Ovary (tissue), 10 donors: ENCODE measurements at regions of chr9 and their contacts with region 1.

Region 1: DNA sequence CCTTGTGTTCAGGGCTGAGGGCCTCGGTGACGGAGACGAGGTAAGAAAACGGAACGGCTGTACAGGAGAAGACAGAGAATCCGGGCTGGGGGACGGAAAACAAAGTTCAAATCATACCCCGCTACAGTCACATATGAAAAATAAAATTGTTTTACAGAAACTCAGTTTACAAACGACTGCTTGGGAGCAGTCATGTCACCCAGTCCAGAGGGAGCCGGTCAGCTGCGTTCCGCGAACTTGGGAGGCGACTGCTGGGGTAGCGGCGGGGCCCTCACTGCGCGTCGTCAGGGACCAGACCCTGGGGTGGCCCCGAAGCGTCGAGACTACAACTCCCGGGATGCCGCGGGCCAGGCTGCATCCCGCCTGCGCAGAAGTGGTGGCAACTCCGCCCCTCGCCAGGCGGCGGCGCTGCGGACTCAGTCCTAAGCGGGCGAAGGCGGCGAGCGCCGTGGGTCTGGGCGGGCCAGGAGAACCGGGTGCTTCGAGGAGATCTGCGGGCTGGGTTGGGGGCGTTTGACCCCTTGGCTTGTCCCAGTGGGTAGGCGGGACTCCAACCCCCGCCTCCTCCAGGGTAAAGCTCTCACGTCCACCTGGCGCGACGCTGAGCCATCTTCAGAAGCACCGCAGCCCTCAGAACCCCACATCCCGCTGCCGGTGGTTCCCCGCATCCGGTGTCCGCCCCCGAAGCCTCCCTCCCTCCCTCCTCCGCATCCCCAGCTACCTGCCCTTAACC is 4.0 kb downstream of the SIT1 start:
- DNase-seq: peak; percentile 93 to 97 (median 95)
- H3K4me3 ChIP-seq: peak overlapping the region; percentile 42
- H3K27ac ChIP-seq: peak overlapping the region; percentile 48 to 78
- H3K4me1 ChIP-seq: peaks cover 3% of the 10 kb centered on the region
- H3K27me3 ChIP-seq: no peaks in the 10 kb centered on the region
- CTCF ChIP-seq: peak; percentile 96 to 99 (median 98)
- EP300 ChIP-seq: no peak
- POLR2A ChIP-seq: peak; percentile 88

Region 2: DNA sequence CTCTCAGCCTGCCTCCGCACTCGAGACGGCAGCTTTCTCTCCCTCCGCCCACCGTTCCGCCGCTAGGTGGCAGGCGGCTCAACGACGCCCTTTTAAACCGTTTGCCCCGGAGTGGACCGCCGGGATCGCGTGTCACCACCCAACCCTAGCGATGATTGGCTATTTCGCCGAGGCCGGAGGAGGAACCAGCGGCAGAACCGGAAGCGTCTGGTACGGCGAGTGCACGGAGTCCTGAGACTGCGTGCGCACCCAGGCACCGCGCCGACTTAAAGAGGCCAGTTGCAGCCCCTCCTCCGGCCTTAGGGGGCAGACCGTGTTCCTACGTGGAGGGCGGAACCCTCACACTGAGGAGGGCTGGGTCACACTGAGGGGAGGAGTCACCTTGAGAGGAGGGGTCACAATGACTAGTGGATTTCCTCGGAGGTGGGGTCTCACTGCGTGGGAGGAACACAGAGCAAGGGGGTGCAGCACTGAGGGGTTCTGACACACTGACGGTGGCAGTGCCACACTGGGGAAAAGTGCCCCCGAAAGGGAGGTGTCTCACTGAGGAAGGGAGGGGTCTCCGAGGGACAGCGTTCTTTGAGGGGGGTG is 42.6 kb before region 1 on chr9:
- intact Hi-C with region 1: loop called in 2 of 4 experiments (anchors 2 to 5 kb)
- DNase-seq: peak; percentile 99 to 100 (median 100)
- H3K4me3 ChIP-seq: peak overlapping the region; percentile 75
- H3K27ac ChIP-seq: peak overlapping the region; percentile 64 to 97
- H3K4me1 ChIP-seq: peaks cover 8% of the 10 kb centered on the region
- H3K27me3 ChIP-seq: no peaks in the 10 kb centered on the region
- CTCF ChIP-seq: peak; percentile 95 to 99 (median 98)
- EP300 ChIP-seq: no peak
- POLR2A ChIP-seq: peak; percentile 49

Region 3: GRCh38 chr9:35835216-35835632 is 188.5 kb after region 1 on chr9:
- intact Hi-C with region 1: loop called in 1 of 4 experiments (anchors 5 kb)
- DNase-seq: no peak
- H3K4me3 ChIP-seq: no peak overlapping the region
- H3K27ac ChIP-seq: no peak overlapping the region
- H3K4me1 ChIP-seq: peaks cover 8% of the 10 kb centered on the region
- H3K27me3 ChIP-seq: no peaks in the 10 kb centered on the region
- CTCF ChIP-seq: no peak
- EP300 ChIP-seq: no peak
- POLR2A ChIP-seq: no peak

Region 4: DNA sequence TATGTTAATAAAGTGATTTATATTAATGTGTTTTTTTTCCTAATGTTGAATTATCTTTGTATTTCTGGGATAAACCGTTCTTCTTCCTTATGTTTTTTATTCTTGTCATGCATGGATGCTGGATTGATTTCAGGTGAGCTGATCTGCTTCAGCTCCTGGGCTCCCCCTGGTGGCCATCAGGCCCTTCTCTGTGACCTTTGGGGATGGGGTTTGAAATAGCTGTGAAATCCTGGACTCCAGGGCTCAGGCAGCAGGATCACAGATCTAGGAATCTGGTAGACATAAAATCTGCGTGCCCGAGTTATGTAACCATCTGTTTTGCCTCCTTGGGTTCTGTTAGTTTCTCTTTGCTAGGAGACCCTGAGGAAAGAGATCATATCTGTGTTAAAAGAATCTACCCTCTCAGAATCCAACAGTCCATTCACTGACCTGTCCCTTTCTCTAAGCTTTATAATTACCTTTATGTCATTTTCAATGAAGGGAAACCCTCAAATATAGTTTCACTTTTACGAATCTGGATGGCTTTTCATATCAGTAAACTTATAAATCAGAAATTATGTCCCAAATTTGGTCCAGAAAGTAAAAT is 235.7 kb after region 1 on chr9:
- intact Hi-C with region 1: loop called in 1 of 4 experiments (anchors 10 kb)
- DNase-seq: peak; percentile 79 to 89 (median 87)
- H3K4me3 ChIP-seq: no peak overlapping the region
- H3K27ac ChIP-seq: no peak overlapping the region
- H3K4me1 ChIP-seq: no peaks in the 10 kb centered on the region
- H3K27me3 ChIP-seq: no peaks in the 10 kb centered on the region
- CTCF ChIP-seq: peak; percentile 82 to 91 (median 85)
- EP300 ChIP-seq: no peak
- POLR2A ChIP-seq: no peak